ENCODE measurements at regions of chr2 and their contacts with region 1.

Region 1: DNA sequence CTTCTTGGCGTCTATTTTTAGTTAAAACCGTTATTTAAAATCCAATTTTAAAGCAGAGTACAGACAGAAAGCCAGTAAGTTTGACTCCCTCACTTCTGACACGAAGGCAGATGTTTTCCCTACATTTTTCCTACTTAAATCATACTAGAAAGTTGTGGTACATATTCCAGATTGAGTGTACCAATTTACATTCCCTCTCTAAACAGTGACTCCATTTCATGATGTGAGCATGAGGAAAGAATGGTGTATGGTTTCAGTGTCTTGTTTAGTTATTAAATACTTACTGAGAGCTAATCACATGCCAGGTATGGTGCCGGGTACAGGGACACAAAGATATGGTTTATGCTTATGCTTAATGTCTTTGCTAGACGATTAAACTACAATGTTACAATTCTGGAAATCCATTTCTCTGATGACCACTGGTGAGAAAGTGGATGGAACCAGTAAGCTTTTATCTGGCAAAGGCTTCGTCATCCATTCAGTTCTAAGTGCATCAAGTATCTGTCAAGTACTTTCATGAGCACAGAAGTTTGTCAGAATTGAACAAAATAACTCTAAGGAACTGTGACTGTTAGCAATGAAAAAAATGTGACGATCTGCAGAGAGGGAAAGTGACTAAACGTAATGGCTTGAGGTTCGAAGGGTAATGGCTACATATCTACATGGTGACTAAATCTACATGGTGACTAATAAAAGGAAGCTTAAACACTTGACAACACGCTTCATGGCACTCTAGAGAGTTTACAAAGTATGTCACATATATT is 25.7 kb downstream of the MAP4K3 start:
- DNase-seq: peak; percentile 71
- H3K4me3 ChIP-seq: peak overlapping the region in 1 of 3 experiments; percentile 34
- H3K27ac ChIP-seq: peak overlapping the region; percentile 43
- H3K4me1 ChIP-seq: peaks cover 36% of the 10 kb centered on the region
- H3K27me3 ChIP-seq: no peaks in the 10 kb centered on the region
- CTCF ChIP-seq: no peak
- POLR2A ChIP-seq: no peak

Region 2: DNA sequence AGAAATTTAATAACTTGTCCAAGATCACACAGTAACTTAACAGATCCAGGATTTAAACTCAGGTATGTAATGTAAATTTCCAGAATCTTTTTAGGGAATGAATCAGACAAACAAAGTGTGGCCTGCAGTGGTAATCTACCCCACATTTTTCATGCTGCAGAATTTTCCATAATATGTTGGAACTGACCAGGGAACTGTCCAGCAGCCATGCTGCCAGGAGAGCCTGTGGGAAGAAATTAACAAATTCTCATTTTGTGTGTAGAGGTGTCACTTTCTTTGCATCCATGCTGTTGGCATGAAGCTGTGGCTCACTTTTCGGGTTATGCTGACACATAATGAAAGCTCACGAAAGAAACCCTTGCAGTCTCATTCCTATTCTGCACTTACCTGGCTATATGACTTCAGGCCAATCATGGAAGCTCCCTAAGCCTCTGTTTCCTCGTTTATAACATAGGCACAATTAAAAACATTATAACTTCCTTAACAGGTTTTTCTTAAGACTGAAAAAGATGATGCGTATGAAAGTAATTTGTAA is 222.3 kb before region 1 on chr2:
- CTCF ChIA-PET with region 1: no interaction called
- POLR2A ChIA-PET with region 1: no interaction called
- dilution Hi-C with region 1: no loop called
- intact Hi-C with region 1: no loop called
- DNase-seq: no peak
- H3K4me3 ChIP-seq: no peak overlapping the region
- H3K27ac ChIP-seq: no peak overlapping the region
- H3K4me1 ChIP-seq: no peaks in the 10 kb centered on the region
- H3K27me3 ChIP-seq: no peaks in the 10 kb centered on the region
- CTCF ChIP-seq: no peak
- POLR2A ChIP-seq: no peak

Region 3: DNA sequence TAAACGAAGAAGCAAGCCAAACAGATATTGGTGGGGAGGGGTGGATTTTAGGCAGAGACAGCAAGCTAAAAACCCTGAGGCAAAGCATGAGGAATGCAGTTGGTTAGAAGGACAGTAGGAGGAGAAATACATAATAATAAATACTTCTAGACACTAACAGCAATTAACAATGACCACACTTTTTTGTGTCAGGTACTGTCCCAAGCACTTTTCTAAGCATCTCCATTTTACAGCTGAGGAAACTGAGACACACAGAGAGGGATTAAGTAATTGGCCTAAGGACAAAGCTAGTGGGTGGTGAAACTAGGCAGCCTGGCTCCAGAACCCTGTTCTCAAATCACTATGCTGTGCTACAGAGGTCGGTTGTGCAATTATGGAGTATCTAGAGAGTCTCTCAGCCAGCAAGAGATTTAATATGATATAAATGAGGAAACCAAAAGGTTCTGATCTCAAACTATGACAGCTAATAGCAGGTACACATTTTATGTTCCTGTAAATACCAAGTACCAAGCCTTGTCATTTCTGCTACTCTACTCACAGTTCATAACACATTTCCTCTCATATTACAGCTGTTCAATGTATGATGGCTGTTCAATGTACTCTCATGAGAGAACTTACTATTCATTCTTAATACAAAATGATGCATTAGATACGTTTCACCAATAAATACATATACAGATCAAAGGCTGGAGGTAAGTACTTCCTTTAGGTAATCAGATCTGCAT is 20.4 kb after region 1 on chr2:
- CTCF ChIA-PET with region 1: interaction called, 16 read pairs
- POLR2A ChIA-PET with region 1: no interaction called
- dilution Hi-C with region 1: no loop called
- intact Hi-C with region 1: no loop called
- DNase-seq: no peak
- H3K4me3 ChIP-seq: no peak overlapping the region
- H3K27ac ChIP-seq: no peak overlapping the region
- H3K4me1 ChIP-seq: peaks cover 12% of the 10 kb centered on the region
- H3K27me3 ChIP-seq: no peaks in the 10 kb centered on the region
- CTCF ChIP-seq: no peak
- POLR2A ChIP-seq: no peak

Measured in endothelial cell of umbilical vein (primary cell).